IMR-90 (cell line): ENCODE measurements at regions of chr6 and their contacts with region 1.

Region 1: GRCh38 chr6:31680840-31681671 is at the start of gene LY6G5C:
- DNase-seq: peak; percentile 94
- ATAC-seq: peak; percentile 96
- H3K4me3 ChIP-seq: peak within 1 kb of the TSS; percentile 27
- H3K27ac ChIP-seq: peak within 1 kb of the TSS; percentile 42
- H3K4me1 ChIP-seq: peaks cover 12% of the 10 kb centered on the region
- H3K27me3 ChIP-seq: no peaks in the 10 kb centered on the region
- CTCF ChIP-seq: peak; percentile 94
- POLR2A ChIP-seq: no peak; the same call in 1 of the 2 replicates
- RAD21 ChIP-seq: peak; percentile 97
- total RNA-seq, gene LY6G5C: 0.18 TPM in 1 of 2 replicates, not detected in the other

Region 2: GRCh38 chr6:31729515-31729978 is 48.5 kb after region 1 on chr6:
- CTCF ChIA-PET with region 1: interaction called, 3 read pairs
- POLR2A ChIA-PET with region 1: interaction called, 4 read pairs
- dilution Hi-C with region 1: no loop called
- in situ Hi-C with region 1: no loop called
- intact Hi-C with region 1: loop called (anchors 2 kb)
- DNase-seq: peak; percentile 79
- ATAC-seq: peak; percentile 81
- H3K4me3 ChIP-seq: peak overlapping the region; percentile 85
- H3K27ac ChIP-seq: peak overlapping the region; percentile 85
- H3K4me1 ChIP-seq: peaks cover 7% of the 10 kb centered on the region
- H3K27me3 ChIP-seq: no peaks in the 10 kb centered on the region
- CTCF ChIP-seq: peak; percentile 67
- POLR2A ChIP-seq: no peak
- RAD21 ChIP-seq: peak; percentile 77

Region 3: GRCh38 chr6:31834434-31835198 is 153.6 kb after region 1 on chr6:
- CTCF ChIA-PET with region 1: no interaction called
- POLR2A ChIA-PET with region 1: no interaction called
- dilution Hi-C with region 1: no loop called
- in situ Hi-C with region 1: loop called (anchors 10 kb)
- intact Hi-C with region 1: loop called (anchors 1 kb)
- DNase-seq: peak; percentile 84
- ATAC-seq: peak; percentile 80
- H3K4me3 ChIP-seq: peak overlapping the region; percentile 93
- H3K27ac ChIP-seq: peak overlapping the region; percentile 94
- H3K4me1 ChIP-seq: peaks cover 13% of the 10 kb centered on the region
- H3K27me3 ChIP-seq: no peaks in the 10 kb centered on the region
- CTCF ChIP-seq: no peak
- POLR2A ChIP-seq: peak; percentile 99
- RAD21 ChIP-seq: no peak

Region 4: GRCh38 chr6:31888276-31889258 is 207.5 kb after region 1 on chr6:
- CTCF ChIA-PET with region 1: no interaction called
- POLR2A ChIA-PET with region 1: no interaction called
- dilution Hi-C with region 1: no loop called
- in situ Hi-C with region 1: no loop called
- intact Hi-C with region 1: loop called (anchors 1 kb)
- DNase-seq: no peak
- ATAC-seq: peak; percentile 66; the same call in 1 of the 2 replicates
- H3K4me3 ChIP-seq: no peak overlapping the region
- H3K27ac ChIP-seq: no peak overlapping the region
- H3K4me1 ChIP-seq: no peaks in the 10 kb centered on the region
- H3K27me3 ChIP-seq: no peaks in the 10 kb centered on the region
- CTCF ChIP-seq: peak; percentile 51
- POLR2A ChIP-seq: no peak
- RAD21 ChIP-seq: peak; percentile 48

Region 5: DNA sequence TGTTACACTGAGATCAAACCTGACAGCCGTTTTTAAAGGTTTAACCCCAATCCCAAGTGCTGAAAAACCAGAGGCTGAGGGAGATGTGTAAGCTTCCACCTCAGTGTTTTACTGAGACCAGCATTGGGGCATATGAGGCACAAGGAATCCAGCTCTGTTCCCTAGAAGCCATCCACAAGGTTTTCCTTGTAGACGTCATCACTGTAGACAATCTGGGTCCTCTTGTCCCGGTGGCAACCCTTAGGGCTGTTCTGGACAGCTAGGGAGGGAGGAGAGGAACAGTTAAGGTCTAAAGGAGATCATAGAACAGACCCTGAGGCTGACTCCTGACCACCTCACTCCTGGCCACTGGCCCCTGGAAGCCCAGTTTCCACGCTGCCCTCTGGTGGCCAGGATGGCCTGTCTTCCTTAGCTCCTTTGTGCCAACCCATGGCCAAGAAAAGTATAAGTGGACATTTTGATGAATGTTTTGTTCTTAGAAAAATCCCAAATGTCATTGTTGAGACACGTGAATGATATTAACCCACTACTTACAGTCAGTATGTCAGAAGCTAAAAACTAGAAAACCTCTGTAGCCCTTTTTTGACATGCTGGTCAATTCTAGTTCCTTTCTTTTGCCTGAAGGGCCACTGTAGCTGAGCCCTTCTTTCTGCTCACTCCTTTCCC is 271.2 kb after region 1 on chr6:
- CTCF ChIA-PET with region 1: interaction called, 3 read pairs
- POLR2A ChIA-PET with region 1: interaction called, 5 read pairs
- dilution Hi-C with region 1: no loop called
- in situ Hi-C with region 1: loop called (anchors 10 kb)
- intact Hi-C with region 1: loop called (anchors 1 kb)
- DNase-seq: peak; percentile 63
- ATAC-seq: peak; percentile 96
- H3K4me3 ChIP-seq: no peak overlapping the region
- H3K27ac ChIP-seq: no peak overlapping the region
- H3K4me1 ChIP-seq: peaks cover 6% of the 10 kb centered on the region
- H3K27me3 ChIP-seq: no peaks in the 10 kb centered on the region
- CTCF ChIP-seq: peak; percentile 84
- POLR2A ChIP-seq: no peak
- RAD21 ChIP-seq: peak; percentile 83